Esophagus muscularis mucosa (tissue), 4 donors: ENCODE measurements at regions of chr19 and their contacts with region 1.

Region 1: DNA sequence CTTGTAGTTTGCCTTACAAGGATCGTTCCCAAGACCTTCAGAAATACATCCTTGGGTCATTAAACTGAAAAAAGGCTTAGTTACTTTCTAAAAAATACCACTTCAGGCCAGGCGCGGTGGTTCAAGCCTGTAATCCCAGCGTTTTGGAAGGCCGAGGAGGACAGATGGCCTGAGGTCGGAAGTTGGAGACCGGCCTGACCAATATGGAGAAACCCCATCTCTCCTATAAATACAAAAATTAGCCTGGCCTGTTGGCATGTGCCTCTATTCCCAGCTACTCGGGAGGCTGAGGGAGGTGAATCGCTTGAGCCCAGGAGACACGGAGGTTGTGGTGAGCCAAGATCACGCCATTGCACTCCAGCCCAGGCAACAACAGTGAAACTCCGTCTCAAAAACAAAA is 2.2 kb upstream of the ZNF28 start:
- DNase-seq: no peak
- H3K4me3 ChIP-seq: no peak overlapping the region
- H3K27ac ChIP-seq: no peak overlapping the region
- H3K4me1 ChIP-seq: peaks cover 0 to 9% (median 6%) of the 10 kb centered on the region in 4 donors
- H3K27me3 ChIP-seq: no peaks in the 10 kb centered on the region
- CTCF ChIP-seq: no peak
- EP300 ChIP-seq: no peak
- POLR2A ChIP-seq: no peak

Region 2: GRCh38 chr19:52554216-52554971 is 269.3 kb before region 1 on chr19:
- intact Hi-C with region 1: no loop called
- DNase-seq: no peak
- H3K4me3 ChIP-seq: no peak overlapping the region
- H3K27ac ChIP-seq: no peak overlapping the region
- H3K4me1 ChIP-seq: no peaks in the 10 kb centered on the region
- H3K27me3 ChIP-seq: no peaks in the 10 kb centered on the region
- CTCF ChIP-seq: no peak
- EP300 ChIP-seq: no peak
- POLR2A ChIP-seq: no peak

Region 3: DNA sequence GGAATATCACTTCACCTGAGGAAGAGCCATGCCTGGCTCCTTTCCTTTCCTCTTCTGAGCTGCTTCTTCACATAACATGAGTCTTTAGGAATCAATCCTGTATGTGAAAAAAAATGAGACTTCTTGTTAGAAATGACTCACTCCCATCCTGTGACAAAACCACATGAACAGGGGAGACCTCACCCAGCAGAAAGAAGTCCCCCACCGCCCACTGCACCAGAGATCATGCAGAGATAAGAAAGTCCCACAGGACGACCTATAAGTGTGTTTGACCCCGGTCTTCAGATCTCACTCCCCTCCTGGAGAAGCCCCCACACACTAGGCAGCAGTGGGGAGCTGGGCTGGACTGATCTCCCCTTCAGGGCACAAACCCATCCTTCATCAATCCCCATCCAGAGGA is 44.9 kb before region 1 on chr19:
- intact Hi-C with region 1: no loop called
- DNase-seq: no peak
- H3K4me3 ChIP-seq: no peak overlapping the region
- H3K27ac ChIP-seq: no peak overlapping the region
- H3K4me1 ChIP-seq: no peaks in the 10 kb centered on the region
- H3K27me3 ChIP-seq: no peaks in the 10 kb centered on the region
- CTCF ChIP-seq: no peak
- EP300 ChIP-seq: no peak
- POLR2A ChIP-seq: no peak

Region 4: GRCh38 chr19:52853880-52854279 is 30.2 kb after region 1 on chr19:
- intact Hi-C with region 1: loop called (anchors 5 kb)
- DNase-seq: no peak
- H3K4me3 ChIP-seq: no peak overlapping the region
- H3K27ac ChIP-seq: no peak overlapping the region
- H3K4me1 ChIP-seq: peaks cover 0 to 15% (median 14%) of the 10 kb centered on the region in 4 donors
- H3K27me3 ChIP-seq: no peaks in the 10 kb centered on the region
- CTCF ChIP-seq: no peak
- EP300 ChIP-seq: no peak
- POLR2A ChIP-seq: no peak